ENCODE measurements at regions of chr2 and their contacts with region 1.

Region 1: GRCh38 chr2:68909793-68910674 is 38.8 kb upstream of the BMP10 start:
- DNase-seq: no peak
- H3K4me3 ChIP-seq: no peak overlapping the region
- H3K27ac ChIP-seq: no peak overlapping the region
- H3K4me1 ChIP-seq: peaks cover 16% of the 10 kb centered on the region
- H3K27me3 ChIP-seq: no peaks in the 10 kb centered on the region
- CTCF ChIP-seq: peak; percentile 65 to 92 (median 88)
- POLR2A ChIP-seq: no peak

Region 2: DNA sequence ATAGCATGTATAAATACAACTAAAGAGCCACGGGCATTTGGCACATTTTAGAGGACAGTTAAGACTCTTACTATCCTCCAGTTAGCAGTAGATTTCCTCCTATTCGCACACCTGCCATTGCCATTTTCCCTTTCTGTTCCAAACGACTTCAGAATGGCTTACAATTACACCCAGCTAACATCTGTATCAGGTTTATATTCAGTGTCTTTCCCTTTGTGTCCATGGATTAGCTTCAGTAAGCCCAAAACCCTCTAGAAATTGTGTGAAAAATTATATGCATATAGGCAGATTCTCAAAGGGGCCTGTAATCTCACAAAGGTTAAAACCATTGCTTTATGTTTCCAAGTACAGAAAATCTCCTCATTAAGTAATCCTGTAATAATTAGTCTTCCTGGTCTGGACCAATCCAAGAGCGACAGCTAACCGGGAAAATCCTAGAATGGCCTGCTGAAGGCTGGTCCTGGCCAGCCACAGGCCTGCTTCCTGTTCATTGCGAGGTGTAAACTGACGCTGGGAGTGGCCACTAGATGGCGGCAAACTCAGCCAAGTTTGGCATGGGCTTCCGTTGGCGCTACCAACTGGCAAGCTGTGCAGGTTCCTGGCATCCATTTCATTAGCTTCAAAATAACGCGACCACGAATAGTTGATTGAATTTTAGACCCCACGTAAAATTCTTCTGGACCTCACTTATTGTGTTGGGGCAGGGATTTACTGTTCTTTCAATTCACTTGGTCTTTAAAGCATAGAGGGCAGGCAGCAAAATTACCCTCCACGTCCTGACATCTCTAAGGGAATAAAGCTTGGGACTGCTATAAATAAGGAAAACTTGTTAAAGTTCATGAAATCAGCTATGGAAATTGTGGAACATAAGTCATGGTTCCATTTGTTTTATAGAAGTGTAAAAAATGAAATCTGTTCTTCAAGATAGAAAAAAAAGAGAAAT is 158.4 kb before region 1 on chr2:
- intact Hi-C with region 1: loop called (anchors 10 kb)
- DNase-seq: peak in 1 of 2 donors; percentile 94
- H3K4me3 ChIP-seq: no peak overlapping the region
- H3K27ac ChIP-seq: no peak overlapping the region
- H3K4me1 ChIP-seq: peaks cover 11% of the 10 kb centered on the region
- H3K27me3 ChIP-seq: no peaks in the 10 kb centered on the region
- CTCF ChIP-seq: peak; percentile 82 to 95 (median 92)
- POLR2A ChIP-seq: no peak